ENCODE measurements at regions of chr13 and their contacts with region 1.

Region 1: DNA sequence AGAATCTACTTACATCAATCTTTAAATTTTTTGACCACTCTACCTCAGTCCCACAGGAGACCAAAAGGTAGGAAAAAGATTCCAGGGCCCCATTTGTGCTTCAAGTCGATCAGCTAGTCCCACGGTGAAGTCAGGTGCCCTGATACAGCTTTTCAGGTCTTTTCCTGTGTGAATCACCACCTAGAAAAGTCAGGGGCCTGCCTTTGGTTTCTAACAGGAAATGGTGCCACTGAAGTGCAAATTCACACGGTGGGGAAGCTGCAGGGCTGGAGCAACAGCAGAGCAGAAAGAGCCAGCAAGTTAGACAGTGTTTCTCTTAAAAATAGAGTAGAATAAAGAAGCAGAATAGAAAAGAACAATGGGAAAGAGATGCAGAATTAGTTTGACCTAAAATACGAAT is 107.5 kb downstream of the KLF12 start:
- DNase-seq: peak; percentile 38 to 89 (median 75)
- ATAC-seq: peak; percentile 95
- H3K4me3 ChIP-seq: peak overlapping the region; percentile 6 to 32
- H3K4me3 Mint-ChIP-seq: peak overlapping the region; percentile 82
- H3K27ac ChIP-seq: peak overlapping the region; percentile 23 to 81
- H3K27ac Mint-ChIP-seq: peak overlapping the region; percentile 94
- H3K4me1 ChIP-seq: peaks cover 64% of the 10 kb centered on the region
- H3K4me1 Mint-ChIP-seq: peaks cover 88% of the 10 kb centered on the region
- H3K27me3 ChIP-seq: no peaks in the 10 kb centered on the region
- H3K27me3 Mint-ChIP-seq: no peaks in the 10 kb centered on the region
- CTCF ChIP-seq: no peak

Region 2: GRCh38 chr13:73411067-73411809 is 615.5 kb before region 1 on chr13:
- CTCF ChIA-PET with region 1: no interaction called
- POLR2A ChIA-PET with region 1: no interaction called
- intact Hi-C with region 1: no loop called
- DNase-seq: no peak
- ATAC-seq: no peak
- H3K4me3 ChIP-seq: no peak overlapping the region
- H3K4me3 Mint-ChIP-seq: no peak overlapping the region
- H3K27ac ChIP-seq: no peak overlapping the region
- H3K27ac Mint-ChIP-seq: no peak overlapping the region
- H3K4me1 ChIP-seq: no peaks in the 10 kb centered on the region
- H3K4me1 Mint-ChIP-seq: no peaks in the 10 kb centered on the region
- H3K27me3 ChIP-seq: no peaks in the 10 kb centered on the region
- H3K27me3 Mint-ChIP-seq: no peaks in the 10 kb centered on the region
- CTCF ChIP-seq: no peak

Region 3: GRCh38 chr13:73984949-73985691 is 41.6 kb before region 1 on chr13:
- CTCF ChIA-PET with region 1: no interaction called
- POLR2A ChIA-PET with region 1: interaction called, 3 read pairs
- intact Hi-C with region 1: loop called in 1 of 2 experiments (anchors 2 kb)
- DNase-seq: peak; percentile 51 to 93 (median 79)
- ATAC-seq: peak; percentile 90
- H3K4me3 ChIP-seq: peak overlapping the region in 1 of 2 experiments; percentile 8
- H3K4me3 Mint-ChIP-seq: peak overlapping the region; percentile 71
- H3K27ac ChIP-seq: peak overlapping the region; percentile 33 to 40
- H3K27ac Mint-ChIP-seq: no peak overlapping the region
- H3K4me1 ChIP-seq: peaks cover 53% of the 10 kb centered on the region
- H3K4me1 Mint-ChIP-seq: peaks cover 43% of the 10 kb centered on the region
- H3K27me3 ChIP-seq: no peaks in the 10 kb centered on the region
- H3K27me3 Mint-ChIP-seq: no peaks in the 10 kb centered on the region
- CTCF ChIP-seq: no peak

Region 4: GRCh38 chr13:74015137-74015536 is 11.6 kb before region 1 on chr13:
- CTCF ChIA-PET with region 1: no interaction called
- POLR2A ChIA-PET with region 1: interaction called, 3 read pairs
- intact Hi-C with region 1: loop called in 1 of 2 experiments (anchors 1 kb)
- DNase-seq: peak in 2 of 9 experiments; percentile 15 to 36
- ATAC-seq: peak; percentile 63
- H3K4me3 ChIP-seq: no peak overlapping the region
- H3K4me3 Mint-ChIP-seq: no peak overlapping the region
- H3K27ac ChIP-seq: no peak overlapping the region
- H3K27ac Mint-ChIP-seq: no peak overlapping the region
- H3K4me1 ChIP-seq: peaks cover 15% of the 10 kb centered on the region
- H3K4me1 Mint-ChIP-seq: peaks cover 71% of the 10 kb centered on the region
- H3K27me3 ChIP-seq: no peaks in the 10 kb centered on the region
- H3K27me3 Mint-ChIP-seq: no peaks in the 10 kb centered on the region
- CTCF ChIP-seq: peak; percentile 44

Region 5: DNA sequence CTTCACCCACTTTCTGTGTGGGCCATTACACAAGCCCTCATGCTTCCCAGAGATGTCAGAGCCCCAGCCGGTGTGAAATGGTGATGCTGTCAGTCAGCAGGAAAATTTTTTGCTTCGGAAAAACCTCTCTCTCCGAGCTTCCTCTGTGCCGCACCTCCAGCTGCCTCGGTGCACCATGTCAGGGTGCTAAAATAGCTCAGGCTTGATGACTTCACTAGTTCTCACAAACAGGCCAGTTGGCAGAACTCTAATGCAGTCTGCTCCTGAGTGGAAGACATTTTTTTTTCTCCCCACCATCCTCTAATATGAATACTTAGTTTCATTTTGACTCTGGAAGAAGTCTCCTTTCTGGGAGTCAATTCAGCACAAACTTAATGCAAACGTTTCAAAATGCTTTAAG is 36.2 kb after region 1 on chr13:
- CTCF ChIA-PET with region 1: no interaction called
- POLR2A ChIA-PET with region 1: interaction called, 7 read pairs
- intact Hi-C with region 1: loop called (anchors 2 to 5 kb)
- DNase-seq: peak in 5 of 9 experiments; percentile 10 to 66 (median 30)
- ATAC-seq: peak; percentile 16
- H3K4me3 ChIP-seq: no peak overlapping the region
- H3K4me3 Mint-ChIP-seq: peak overlapping the region; percentile 30
- H3K27ac ChIP-seq: peak overlapping the region in 1 of 2 experiments; percentile 76
- H3K27ac Mint-ChIP-seq: peak overlapping the region; percentile 81
- H3K4me1 ChIP-seq: peaks cover 55% of the 10 kb centered on the region
- H3K4me1 Mint-ChIP-seq: peaks cover 85% of the 10 kb centered on the region
- H3K27me3 ChIP-seq: no peaks in the 10 kb centered on the region
- H3K27me3 Mint-ChIP-seq: no peaks in the 10 kb centered on the region
- CTCF ChIP-seq: no peak

Region 6: GRCh38 chr13:74070065-74070464 is 43.3 kb after region 1 on chr13:
- CTCF ChIA-PET with region 1: no interaction called
- POLR2A ChIA-PET with region 1: no interaction called
- intact Hi-C with region 1: loop called in 1 of 2 experiments (anchors 2 kb)
- DNase-seq: peak in 6 of 9 experiments; percentile 7 to 79 (median 47)
- ATAC-seq: peak; percentile 75
- H3K4me3 ChIP-seq: peak overlapping the region; percentile 7 to 14
- H3K4me3 Mint-ChIP-seq: peak overlapping the region; percentile 70
- H3K27ac ChIP-seq: peak overlapping the region in 1 of 2 experiments; percentile 69
- H3K27ac Mint-ChIP-seq: peak overlapping the region; percentile 89
- H3K4me1 ChIP-seq: peaks cover 50% of the 10 kb centered on the region
- H3K4me1 Mint-ChIP-seq: peaks cover 78% of the 10 kb centered on the region
- H3K27me3 ChIP-seq: no peaks in the 10 kb centered on the region
- H3K27me3 Mint-ChIP-seq: no peaks in the 10 kb centered on the region
- CTCF ChIP-seq: no peak

Region 7: GRCh38 chr13:75312884-75313520 is 1286.2 kb after region 1 on chr13:
- CTCF ChIA-PET with region 1: no interaction called
- POLR2A ChIA-PET with region 1: no interaction called
- intact Hi-C with region 1: loop called in 1 of 2 experiments (anchors 10 kb)
- DNase-seq: peak in 4 of 9 experiments; percentile 8 to 49 (median 12)
- ATAC-seq: no peak
- H3K4me3 ChIP-seq: no peak overlapping the region
- H3K4me3 Mint-ChIP-seq: no peak overlapping the region
- H3K27ac ChIP-seq: no peak overlapping the region
- H3K27ac Mint-ChIP-seq: no peak overlapping the region
- H3K4me1 ChIP-seq: peaks cover 19% of the 10 kb centered on the region
- H3K4me1 Mint-ChIP-seq: peaks cover 35% of the 10 kb centered on the region
- H3K27me3 ChIP-seq: no peaks in the 10 kb centered on the region
- H3K27me3 Mint-ChIP-seq: no peaks in the 10 kb centered on the region
- CTCF ChIP-seq: no peak

Measured in CD8-positive, alpha-beta T cell (primary cell).